Ascending aorta (tissue), 2 donors: ENCODE measurements at regions of chr7 and their contacts with region 1.

Region 1: GRCh38 chr7:44885394-44886317 is at the start of gene PURB:
- DNase-seq: peak; percentile 84 to 97
- H3K4me3 ChIP-seq: peak within 1 kb of the TSS; percentile 58 to 97
- H3K27ac ChIP-seq: peak within 1 kb of the TSS; percentile 98 to 99
- H3K4me1 ChIP-seq: peaks cover 13 to 34% of the 10 kb centered on the region in 2 donors
- H3K27me3 ChIP-seq: no peaks in the 10 kb centered on the region
- CTCF ChIP-seq: no peak
- total RNA-seq, gene PURB: 19.1 TPM

Region 2: GRCh38 chr7:43869006-43869866 is 1016.4 kb before region 1 on chr7 and contains the start of gene MRPS24:
- intact Hi-C with region 1: loop called (anchors 5 kb)
- DNase-seq: peak; percentile 73 to 97
- H3K4me3 ChIP-seq: peak within 1 kb of the TSS; percentile 78 to 99
- H3K27ac ChIP-seq: peak within 1 kb of the TSS; percentile 93 to 95
- H3K4me1 ChIP-seq: peaks cover 12 to 17% of the 10 kb centered on the region in 2 donors
- H3K27me3 ChIP-seq: no peaks in the 10 kb centered on the region
- CTCF ChIP-seq: no peak
- total RNA-seq, gene MRPS24: 145 TPM

Region 3: DNA sequence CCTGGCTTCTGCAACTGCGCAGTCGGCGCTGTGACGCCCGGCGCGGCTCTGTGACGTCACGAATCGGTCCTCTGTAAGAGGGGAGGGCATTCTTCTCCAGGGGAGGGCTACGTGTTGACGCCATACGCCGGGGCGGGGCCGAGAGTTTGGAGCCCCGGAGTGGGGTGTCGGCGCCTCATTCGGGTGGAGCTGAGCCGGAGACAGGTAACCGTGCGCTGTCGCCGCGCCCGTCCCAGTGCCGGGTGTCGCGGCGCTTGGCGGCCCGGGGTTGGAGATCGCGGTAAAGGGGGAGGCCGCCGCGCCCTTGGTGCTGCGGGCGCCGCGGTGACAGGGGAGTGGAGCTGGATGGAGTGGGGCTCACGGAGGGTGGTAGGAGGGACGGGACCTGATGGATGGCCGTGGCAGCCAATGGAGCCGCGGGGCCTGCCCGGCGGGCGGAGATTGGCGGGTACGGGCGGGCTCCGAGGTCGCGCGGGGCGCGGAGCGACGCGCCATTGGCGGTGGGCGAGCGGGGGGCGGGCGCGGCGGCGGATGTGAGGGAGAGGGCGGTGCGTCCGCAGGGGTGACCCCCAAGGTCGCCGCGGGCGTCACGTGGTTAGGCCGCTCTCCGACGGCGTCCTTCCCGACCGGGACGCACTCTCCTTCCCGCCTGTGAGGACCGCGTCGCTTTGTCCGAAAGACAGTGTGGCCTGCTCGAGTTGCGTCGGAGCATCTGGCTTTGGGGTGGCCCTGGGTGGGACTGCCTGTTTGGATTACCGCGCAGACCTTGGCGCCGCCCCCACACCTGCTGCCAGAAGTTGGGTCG is 279.0 kb before region 1 on chr7 and contains the start of gene OGDH:
- intact Hi-C with region 1: loop called (anchors 1 kb)
- DNase-seq: peak; percentile 95 to 99
- H3K4me3 ChIP-seq: peak within 1 kb of the TSS; percentile 70 to 85
- H3K27ac ChIP-seq: peak within 1 kb of the TSS; percentile 95 to 99
- H3K4me1 ChIP-seq: peaks cover 0 to 7% of the 10 kb centered on the region in 2 donors
- H3K27me3 ChIP-seq: no peaks in the 10 kb centered on the region
- CTCF ChIP-seq: no peak
- total RNA-seq, gene OGDH: 117 TPM

Region 4: GRCh38 chr7:44858161-44858560 is 27.5 kb before region 1 on chr7:
- intact Hi-C with region 1: loop called (anchors 2 kb)
- DNase-seq: no peak
- H3K4me3 ChIP-seq: no peak overlapping the region
- H3K27ac ChIP-seq: no peak overlapping the region
- H3K4me1 ChIP-seq: peaks cover 0 to 2% of the 10 kb centered on the region in 2 donors
- H3K27me3 ChIP-seq: no peaks in the 10 kb centered on the region
- CTCF ChIP-seq: no peak

Region 5: DNA sequence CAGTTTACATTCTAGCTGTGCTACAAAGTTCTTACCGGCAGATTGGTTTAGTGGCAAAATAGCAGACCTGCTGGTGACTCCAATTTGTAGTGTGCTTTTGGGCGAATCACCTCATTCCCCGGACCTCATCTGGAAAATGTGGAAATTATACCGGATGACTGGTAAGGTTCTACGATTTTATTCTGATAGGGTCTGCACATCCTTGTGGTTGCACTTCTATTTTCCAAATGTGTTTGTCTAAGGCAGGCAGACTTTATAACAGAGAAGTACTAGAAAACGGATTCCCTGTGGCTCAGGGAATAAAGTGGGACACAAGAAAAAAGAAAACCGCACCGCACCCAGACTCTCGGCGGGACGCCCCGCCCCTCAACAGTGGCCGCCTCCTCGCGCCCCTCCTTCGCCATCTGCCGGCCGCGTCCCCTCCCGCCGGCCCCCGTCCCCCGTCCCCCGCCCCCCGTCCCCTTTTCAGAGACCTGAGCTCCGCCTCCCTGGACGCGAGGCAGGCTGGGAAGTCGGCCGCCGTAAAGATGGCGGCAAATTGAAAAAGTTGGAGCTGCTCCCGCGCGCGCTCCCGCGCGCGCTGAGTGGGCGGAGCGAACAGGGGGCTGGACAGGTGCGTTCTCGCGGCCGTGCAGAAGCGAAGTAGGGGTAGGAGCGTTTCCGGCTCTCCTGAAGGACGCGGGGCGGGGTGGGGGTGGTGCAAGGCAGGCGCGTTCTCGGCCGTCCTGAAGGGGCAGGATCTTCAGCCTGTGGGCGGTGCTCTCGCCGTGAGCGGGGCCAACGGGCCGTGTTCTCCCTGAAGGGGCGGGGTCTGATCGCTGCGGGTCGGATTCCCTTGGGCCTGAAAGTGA is 113.8 kb after region 1 on chr7:
- intact Hi-C with region 1: loop called (anchors 2 kb)
- DNase-seq: peak; percentile 98 to 100
- H3K4me3 ChIP-seq: peak overlapping the region; percentile 87 to 96
- H3K27ac ChIP-seq: peak overlapping the region; percentile 78 to 96
- H3K4me1 ChIP-seq: peaks cover 0 to 18% of the 10 kb centered on the region in 2 donors
- H3K27me3 ChIP-seq: no peaks in the 10 kb centered on the region
- CTCF ChIP-seq: peak in 1 of 3 experiments; percentile 26

Region 6: DNA sequence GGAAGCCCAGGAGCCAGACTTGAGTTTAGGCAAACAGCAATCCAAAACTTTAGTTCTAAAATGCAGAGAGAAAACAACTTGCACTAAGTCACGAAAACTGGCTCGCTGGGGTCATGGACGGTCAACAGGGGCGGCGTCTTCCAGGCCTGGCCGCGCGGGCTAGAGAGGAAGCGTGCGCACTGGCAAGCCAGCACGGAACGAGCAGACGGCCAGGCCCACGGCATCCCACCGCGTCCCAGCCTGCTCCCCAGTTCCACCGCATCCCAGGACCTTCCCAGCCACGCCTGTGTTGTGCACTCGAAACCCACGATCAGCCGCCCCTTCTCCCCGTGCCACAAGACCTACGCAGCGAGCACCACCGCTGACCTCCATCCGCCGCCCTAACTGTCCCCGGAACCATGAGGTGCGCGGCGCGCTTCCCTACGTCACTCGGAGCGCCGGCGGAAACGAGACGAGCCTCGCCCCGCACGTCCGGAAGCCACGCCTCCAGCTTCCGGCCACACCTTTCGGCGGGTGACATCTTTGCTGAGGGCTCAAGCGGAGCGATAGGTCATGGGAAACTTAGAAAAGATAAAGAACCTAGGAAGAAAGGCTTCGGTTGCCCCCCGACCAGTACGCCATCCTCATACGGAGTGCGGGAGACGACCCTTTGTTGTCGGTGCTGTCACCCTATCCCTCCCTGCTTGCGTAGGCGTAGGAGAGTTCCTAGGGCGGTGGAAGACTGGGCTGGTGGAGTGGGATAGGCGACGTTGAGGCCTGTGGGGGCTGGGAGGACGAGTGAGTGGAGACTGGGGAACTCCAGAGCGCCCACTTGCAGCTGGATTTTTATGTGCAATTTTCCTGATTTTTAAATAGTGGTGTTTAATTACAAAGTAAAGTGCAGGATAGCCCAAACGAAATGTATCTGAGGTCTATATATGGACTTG is 225.9 kb after region 1 on chr7 and contains the start of gene TBRG4:
- intact Hi-C with region 1: loop called (anchors 1 kb)
- DNase-seq: peak; percentile 68 to 96
- H3K4me3 ChIP-seq: peak within 1 kb of the TSS; percentile 82 to 85
- H3K27ac ChIP-seq: peak within 1 kb of the TSS; percentile 89 to 95
- H3K4me1 ChIP-seq: peaks cover 0 to 15% of the 10 kb centered on the region in 2 donors
- H3K27me3 ChIP-seq: no peaks in the 10 kb centered on the region
- CTCF ChIP-seq: peak in 2 of 3 experiments; percentile 35 to 48
- total RNA-seq, gene TBRG4: 216 TPM